ENCODE measurements at regions of chr4 and their contacts with region 1.

Region 1: GRCh38 chr4:1069382-1069781 is 44.0 kb downstream of the RNF212 start:
- DNase-seq: peak in 1 of 2 donors; percentile 4
- H3K4me3 ChIP-seq: no peak overlapping the region
- H3K27ac ChIP-seq: no peak overlapping the region
- H3K4me1 ChIP-seq: peaks cover 0 to 5% (median 0%) of the 10 kb centered on the region in 4 donors
- H3K27me3 ChIP-seq: peaks cover 0 to 42% of the 10 kb centered on the region in 2 donors
- CTCF ChIP-seq: no peak

Region 2: DNA sequence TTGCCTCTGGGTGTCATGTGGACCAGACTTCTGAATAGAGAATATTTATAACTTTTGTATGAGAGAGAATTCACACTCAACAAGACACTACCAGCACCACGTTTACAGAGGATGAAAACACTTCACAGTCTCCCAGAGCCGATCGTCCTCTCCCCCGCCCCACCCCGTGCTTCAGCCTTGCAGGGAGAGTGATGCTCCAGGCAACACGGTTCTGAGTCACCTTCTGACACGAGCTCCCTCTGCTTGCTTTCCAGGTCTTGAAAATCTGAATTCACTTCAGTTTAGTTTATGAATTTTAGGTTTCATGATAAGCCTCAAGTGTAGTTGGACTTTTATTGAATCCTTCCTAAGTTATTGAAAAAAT is 303.2 kb before region 1 on chr4:
- intact Hi-C with region 1: loop called (anchors 5 kb)
- DNase-seq: no peak
- H3K4me3 ChIP-seq: no peak overlapping the region
- H3K27ac ChIP-seq: no peak overlapping the region
- H3K4me1 ChIP-seq: no peaks in the 10 kb centered on the region
- H3K27me3 ChIP-seq: no peaks in the 10 kb centered on the region
- CTCF ChIP-seq: no peak

Measured in tibial artery (tissue), 4 donors.